H1 (cell line): ENCODE measurements at regions of chr10 and their contacts with region 1.

Region 1: GRCh38 chr10:72248468-72249151 is 25.1 kb upstream of the DDIT4 start:
- DNase-seq: peak in 1 of 2 experiments; percentile 61
- H3K4me3 ChIP-seq: peak overlapping the region in 1 of 4 experiments; percentile 27; a peak in 2 of 8 replicates
- H3K27ac ChIP-seq: no peak overlapping the region; the same call in 1 of the 2 replicates
- H3K4me1 ChIP-seq: peaks cover 8 to 14% (median 12%) of the 10 kb centered on the region in 4 experiments
- H3K27me3 ChIP-seq: no peaks in the 10 kb centered on the region; a peak in 1 of 7 replicates
- CTCF ChIP-seq: no peak
- EP300 ChIP-seq: no peak
- POLR2A ChIP-seq: peak in 1 of 2 experiments; percentile 61; a peak in 1 of 3 replicates
- RAD21 ChIP-seq: no peak

Region 2: DNA sequence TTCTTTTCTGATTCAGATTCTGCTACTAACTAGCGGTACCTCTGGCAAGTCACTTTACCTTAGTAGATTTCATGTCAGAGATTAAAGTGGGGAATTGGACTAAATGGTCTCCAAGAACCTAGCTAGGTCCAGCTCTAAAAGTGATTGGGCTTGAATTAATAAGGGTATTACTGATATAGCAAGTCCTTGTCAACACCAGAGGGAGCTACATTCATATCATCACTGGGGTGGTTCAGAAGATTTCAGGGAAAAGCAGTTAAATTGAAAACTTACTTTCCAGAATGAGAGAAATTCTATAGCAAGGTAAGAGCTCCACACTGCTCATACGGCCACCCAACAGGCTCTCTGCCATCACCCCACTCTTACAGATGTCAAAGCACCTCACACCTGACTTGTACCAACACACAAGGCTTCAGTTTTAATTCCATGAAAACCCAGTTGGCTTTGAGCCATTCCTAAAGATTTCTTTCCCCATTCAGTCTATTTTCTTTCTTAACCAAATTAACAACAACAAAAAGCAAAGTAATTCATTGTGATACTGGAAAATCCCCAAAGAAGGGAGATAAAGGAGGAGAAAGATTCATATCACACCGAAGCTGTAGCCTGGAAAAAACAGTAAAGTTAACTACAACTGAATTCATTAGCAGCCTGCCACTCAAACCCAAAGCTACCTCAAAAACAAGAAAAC is 122.3 kb before region 1 on chr10:
- CTCF ChIA-PET with region 1: no interaction called
- POLR2A ChIA-PET with region 1: no interaction called
- DNase-seq: no peak
- H3K4me3 ChIP-seq: no peak overlapping the region; a peak in 1 of 8 replicates
- H3K27ac ChIP-seq: no peak overlapping the region; the same call in 1 of the 2 replicates
- H3K4me1 ChIP-seq: peaks cover 0 to 5% (median 2%) of the 10 kb centered on the region in 4 experiments; a peak in 2 of 7 replicates
- H3K27me3 ChIP-seq: no peaks in the 10 kb centered on the region
- CTCF ChIP-seq: peak in 2 of 3 experiments; percentile 45 to 47; a peak in 2 of 4 replicates
- EP300 ChIP-seq: no peak
- POLR2A ChIP-seq: no peak
- RAD21 ChIP-seq: peak; percentile 59 to 66

Region 3: DNA sequence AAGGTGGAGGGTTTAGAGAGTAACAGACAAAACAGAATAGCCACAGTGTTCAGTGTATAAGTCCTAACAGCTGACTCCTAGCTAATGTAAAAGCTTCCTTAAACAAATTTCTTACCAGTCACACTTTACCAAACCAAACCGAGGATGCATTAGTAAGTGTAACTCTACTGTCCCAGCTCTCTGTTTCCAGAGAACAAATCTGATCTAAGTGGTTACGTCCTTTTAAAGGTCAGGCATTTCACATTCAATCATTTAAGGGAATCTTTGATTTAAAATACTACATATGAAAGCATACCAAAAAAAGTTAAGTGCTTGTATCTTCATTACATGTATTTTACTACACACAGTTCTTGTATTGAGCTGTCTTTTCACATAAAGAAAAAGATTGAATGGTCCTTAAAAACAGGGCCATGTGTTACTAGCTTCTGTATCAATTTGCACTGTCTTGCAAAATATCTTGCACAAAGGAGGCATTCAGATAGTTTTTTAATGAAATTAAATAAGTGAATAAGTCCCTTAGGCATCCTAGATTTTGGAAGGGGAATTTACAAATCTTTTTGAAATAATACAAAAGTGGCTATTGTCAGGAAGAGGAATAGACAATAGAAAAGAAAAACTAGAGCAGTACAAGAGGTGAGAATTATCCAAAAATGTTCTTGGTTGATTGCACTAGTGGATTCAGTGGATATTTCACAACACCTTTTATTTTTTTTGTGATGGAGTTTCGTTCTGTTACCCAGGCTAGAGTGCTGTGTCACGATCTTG is 101.9 kb before region 1 on chr10:
- CTCF ChIA-PET with region 1: no interaction called
- POLR2A ChIA-PET with region 1: no interaction called
- DNase-seq: no peak
- H3K4me3 ChIP-seq: no peak overlapping the region
- H3K27ac ChIP-seq: no peak overlapping the region
- H3K4me1 ChIP-seq: peaks cover 0 to 8% (median 5%) of the 10 kb centered on the region in 4 experiments; a peak in 5 of 7 replicates
- H3K27me3 ChIP-seq: no peaks in the 10 kb centered on the region
- CTCF ChIP-seq: no peak
- EP300 ChIP-seq: no peak
- POLR2A ChIP-seq: no peak
- RAD21 ChIP-seq: no peak

Region 4: DNA sequence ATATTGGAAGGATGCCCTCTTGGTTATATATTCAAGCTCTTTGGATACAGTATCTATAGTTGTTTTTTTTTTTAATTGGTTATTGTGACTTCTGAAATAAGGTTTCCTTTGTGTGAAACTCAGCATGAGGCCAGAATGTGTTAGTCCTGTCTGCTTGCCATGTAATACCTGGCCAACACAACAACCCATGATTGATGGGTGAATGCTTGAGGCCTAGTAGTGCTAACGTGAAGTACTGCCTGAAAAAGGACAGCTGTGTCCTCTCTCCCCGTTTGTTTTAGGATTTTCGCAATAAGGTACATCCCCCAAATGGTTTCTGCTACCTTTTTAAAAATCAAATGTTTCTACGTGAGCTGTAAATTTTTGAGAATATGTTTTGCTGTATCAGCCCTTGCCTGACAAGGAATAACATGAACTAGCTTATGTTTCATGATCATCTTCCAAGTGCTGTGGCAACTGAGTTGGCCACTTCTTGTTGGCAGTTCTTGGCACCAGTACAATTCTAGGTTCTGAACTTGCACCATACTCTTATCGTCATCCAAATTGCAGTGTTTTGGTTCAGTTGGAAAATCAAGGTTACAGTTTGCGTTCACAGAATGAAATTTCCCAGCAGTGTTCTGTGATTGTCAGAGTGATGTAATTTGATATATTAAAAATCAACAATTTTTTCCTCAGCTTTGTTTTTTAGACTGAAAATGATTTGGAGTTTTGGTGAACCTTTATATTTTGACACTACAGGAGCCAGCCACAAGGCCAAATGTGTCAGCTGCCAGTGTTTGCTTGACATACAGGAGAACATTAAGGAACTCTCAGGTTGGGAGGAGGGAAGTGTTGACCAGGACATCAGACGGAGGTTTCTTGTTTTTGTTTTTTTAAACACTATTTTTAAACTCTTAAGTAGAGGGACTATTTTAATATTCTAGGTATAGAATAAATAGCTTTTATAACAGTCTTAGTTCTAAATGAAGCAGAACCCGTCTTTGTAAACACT is 19.1 kb before region 1 on chr10:
- CTCF ChIA-PET with region 1: interaction called, 3 read pairs
- POLR2A ChIA-PET with region 1: interaction called, 13 read pairs
- DNase-seq: no peak
- H3K4me3 ChIP-seq: no peak overlapping the region
- H3K27ac ChIP-seq: no peak overlapping the region
- H3K4me1 ChIP-seq: peaks cover 0 to 6% (median 3%) of the 10 kb centered on the region in 4 experiments; a peak in 4 of 7 replicates
- H3K27me3 ChIP-seq: no peaks in the 10 kb centered on the region
- CTCF ChIP-seq: no peak
- EP300 ChIP-seq: no peak
- POLR2A ChIP-seq: no peak
- RAD21 ChIP-seq: no peak

Region 5: DNA sequence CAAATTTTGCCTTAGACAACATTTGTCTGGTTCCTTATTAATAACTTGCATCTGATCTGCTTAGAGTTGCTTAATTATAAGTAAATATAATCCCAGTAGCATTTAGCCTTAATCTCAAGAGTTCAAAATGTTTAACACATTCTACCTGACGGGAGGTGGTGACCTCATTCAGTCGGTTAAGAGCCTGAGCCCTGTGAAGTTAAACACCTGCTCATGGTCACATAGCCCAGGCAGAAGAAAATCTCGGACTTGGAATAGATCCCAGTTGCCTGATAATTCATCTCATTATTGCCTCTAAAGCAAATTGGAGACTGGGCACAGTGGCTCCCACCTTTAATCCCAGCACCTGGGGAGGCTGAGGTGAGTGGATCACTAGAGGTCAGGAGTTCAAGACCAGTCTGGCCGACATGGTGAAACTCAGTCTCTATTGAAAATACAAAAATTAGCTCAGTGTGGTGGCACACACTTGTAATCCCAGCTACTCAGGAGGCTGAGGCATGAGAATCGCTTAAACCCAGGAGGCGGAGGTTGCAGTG is 14.0 kb before region 1 on chr10:
- CTCF ChIA-PET with region 1: no interaction called
- POLR2A ChIA-PET with region 1: interaction called, 35 read pairs
- DNase-seq: no peak
- H3K4me3 ChIP-seq: no peak overlapping the region
- H3K27ac ChIP-seq: no peak overlapping the region
- H3K4me1 ChIP-seq: peaks cover 0 to under 1% (median 0%) of the 10 kb centered on the region in 4 experiments; a peak in 2 of 7 replicates
- H3K27me3 ChIP-seq: no peaks in the 10 kb centered on the region
- CTCF ChIP-seq: no peak
- EP300 ChIP-seq: no peak
- POLR2A ChIP-seq: no peak
- RAD21 ChIP-seq: no peak

Region 6: GRCh38 chr10:72260588-72261322 is 12.1 kb after region 1 on chr10:
- CTCF ChIA-PET with region 1: interaction called, 8 read pairs
- POLR2A ChIA-PET with region 1: interaction called, 23 read pairs
- DNase-seq: peak; percentile 93 to 96
- H3K4me3 ChIP-seq: peak overlapping the region; percentile 31 to 56 (median 46); a peak in 7 of 8 replicates
- H3K27ac ChIP-seq: peak overlapping the region; percentile 87
- H3K4me1 ChIP-seq: peaks cover 17 to 34% (median 24%) of the 10 kb centered on the region in 4 experiments
- H3K27me3 ChIP-seq: no peaks in the 10 kb centered on the region
- CTCF ChIP-seq: peak; percentile 19 to 47 (median 21); a peak in 3 of 4 replicates
- EP300 ChIP-seq: peak; percentile 14 to 68; a peak in 2 of 3 replicates
- POLR2A ChIP-seq: peak in 1 of 2 experiments; percentile 68; a peak in 1 of 3 replicates
- RAD21 ChIP-seq: peak; percentile 23 to 54; a peak in 2 of 4 replicates

Region 7: GRCh38 chr10:72312865-72313391 is 64.3 kb after region 1 on chr10:
- CTCF ChIA-PET with region 1: no interaction called
- POLR2A ChIA-PET with region 1: no interaction called
- DNase-seq: no peak
- H3K4me3 ChIP-seq: no peak overlapping the region
- H3K27ac ChIP-seq: no peak overlapping the region
- H3K4me1 ChIP-seq: peaks cover 4 to 24% (median 16%) of the 10 kb centered on the region in 4 experiments
- H3K27me3 ChIP-seq: peaks cover 0 to 3% (median 0%) of the 10 kb centered on the region in 4 experiments; a peak in 1 of 7 replicates
- CTCF ChIP-seq: no peak
- EP300 ChIP-seq: no peak
- POLR2A ChIP-seq: no peak
- RAD21 ChIP-seq: no peak

Region 8: DNA sequence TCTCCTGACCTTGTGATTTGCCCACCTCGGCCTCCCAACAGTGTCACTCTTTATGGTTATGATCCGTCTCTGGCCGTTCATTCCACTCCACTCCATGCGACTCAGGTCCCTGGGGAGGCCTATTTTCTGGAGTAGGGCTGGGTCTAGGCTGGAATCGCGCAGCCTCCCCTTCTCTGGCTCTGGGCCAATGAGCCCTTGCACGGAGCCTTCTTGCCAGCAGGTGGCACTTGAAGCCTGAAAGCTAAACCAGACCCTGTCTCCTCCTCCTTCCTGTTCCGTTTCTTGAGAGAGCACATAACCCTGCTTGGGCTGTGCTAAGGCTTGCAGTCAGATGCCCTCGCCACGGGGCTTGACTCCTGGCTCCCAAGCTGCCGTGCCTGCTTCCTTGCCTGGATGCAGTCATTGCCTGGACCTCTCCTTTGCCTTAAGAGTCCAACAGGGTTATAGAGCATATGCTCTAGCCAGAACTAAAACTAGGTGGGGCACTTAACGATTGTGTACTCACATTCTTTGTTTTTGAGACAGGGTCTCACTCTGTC is 115.7 kb after region 1 on chr10:
- CTCF ChIA-PET with region 1: no interaction called
- POLR2A ChIA-PET with region 1: no interaction called
- DNase-seq: peak; percentile 73 to 91
- H3K4me3 ChIP-seq: no peak overlapping the region
- H3K27ac ChIP-seq: no peak overlapping the region
- H3K4me1 ChIP-seq: peaks cover 0 to 2% (median under 1%) of the 10 kb centered on the region in 4 experiments; a peak in 1 of 7 replicates
- H3K27me3 ChIP-seq: no peaks in the 10 kb centered on the region
- CTCF ChIP-seq: peak; percentile 85 to 99 (median 87)
- EP300 ChIP-seq: no peak
- POLR2A ChIP-seq: peak in 1 of 2 experiments; percentile 44; a peak in 1 of 3 replicates
- RAD21 ChIP-seq: peak; percentile 97 to 98